AG04450 (cell line): ENCODE measurements at regions of chr12 and their contacts with region 1.

Region 1: GRCh38 chr12:32455607-32456071 is 56.3 kb downstream of the FGD4 start:
- DNase-seq: peak; percentile 33
- H3K4me3 ChIP-seq: peak overlapping the region; percentile 46
- H3K27ac ChIP-seq: no peak overlapping the region
- H3K27me3 ChIP-seq: no peaks in the 10 kb centered on the region
- CTCF ChIP-seq: peak; percentile 66

Region 2: DNA sequence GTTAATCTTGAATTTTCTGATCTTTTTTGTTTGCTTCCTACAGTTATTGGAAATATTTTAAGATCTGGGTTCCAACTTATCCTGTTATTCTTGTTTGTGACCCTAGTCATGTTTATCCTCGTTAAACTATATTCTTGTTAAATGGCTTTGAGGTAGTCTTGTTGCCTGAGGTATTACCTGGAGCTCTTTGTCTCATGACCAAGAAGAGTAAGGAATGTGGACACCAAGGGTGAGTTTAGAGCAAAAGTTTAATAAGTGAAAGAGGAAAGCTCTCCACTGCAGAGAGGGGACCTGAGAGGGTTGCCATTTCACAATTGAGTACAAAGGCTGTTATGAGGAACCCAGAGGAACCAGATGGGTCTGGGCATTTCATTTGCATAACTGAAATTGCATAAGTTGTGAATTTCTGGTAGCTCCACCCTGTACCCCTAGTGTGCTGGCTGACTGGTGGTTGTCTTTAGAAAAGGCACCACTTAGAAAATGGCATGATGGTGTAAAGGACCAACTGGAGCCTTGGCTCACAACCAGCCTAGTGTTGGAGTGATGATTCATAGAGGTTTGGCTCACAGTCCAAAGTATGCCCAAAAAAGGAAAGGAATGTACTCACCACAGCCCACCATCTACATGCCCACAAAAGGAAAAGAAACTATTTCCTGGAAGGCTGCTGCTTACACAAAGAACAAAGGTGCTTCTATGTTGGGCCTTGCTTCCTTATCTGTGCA is 533.1 kb before region 1 on chr12:
- CTCF ChIA-PET with region 1: interaction called, 11 read pairs
- POLR2A ChIA-PET with region 1: no interaction called
- DNase-seq: no peak
- H3K4me3 ChIP-seq: no peak overlapping the region
- H3K27ac ChIP-seq: no peak overlapping the region
- H3K27me3 ChIP-seq: no peaks in the 10 kb centered on the region
- CTCF ChIP-seq: no peak

Region 3: GRCh38 chr12:32482226-32482625 is 26.6 kb after region 1 on chr12:
- CTCF ChIA-PET with region 1: no interaction called
- POLR2A ChIA-PET with region 1: no interaction called
- DNase-seq: no peak
- H3K4me3 ChIP-seq: no peak overlapping the region
- H3K27ac ChIP-seq: no peak overlapping the region
- H3K27me3 ChIP-seq: peaks cover 3% of the 10 kb centered on the region
- CTCF ChIP-seq: no peak

Region 4: DNA sequence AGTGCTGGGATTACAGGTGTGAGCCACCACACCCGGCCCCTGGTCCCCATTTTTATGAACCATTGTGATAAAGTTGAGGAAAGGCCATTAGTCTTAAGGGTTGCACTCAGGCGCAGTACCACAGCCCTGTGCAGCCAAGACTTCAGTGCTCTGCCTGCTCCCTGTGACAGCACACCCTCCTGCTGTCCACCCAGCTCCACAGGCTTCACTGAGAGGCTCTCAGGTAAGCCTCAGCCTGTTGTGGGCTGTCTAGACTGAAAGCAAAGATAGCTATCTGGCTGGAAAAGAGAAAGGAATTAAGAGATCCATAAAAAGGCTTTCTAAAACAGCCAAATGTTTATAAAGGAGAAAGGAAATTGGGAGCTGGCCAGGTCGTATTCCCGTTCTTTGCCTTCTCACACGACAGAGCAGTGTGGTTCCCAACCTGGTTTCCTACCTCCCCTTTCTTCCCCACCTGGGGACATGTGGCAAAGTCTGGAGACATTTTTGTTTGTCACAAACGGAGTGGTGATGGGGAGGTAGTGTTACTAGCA is 204.3 kb after region 1 on chr12:
- CTCF ChIA-PET with region 1: interaction called, 56 read pairs
- POLR2A ChIA-PET with region 1: no interaction called
- DNase-seq: no peak
- H3K4me3 ChIP-seq: no peak overlapping the region
- H3K27ac ChIP-seq: no peak overlapping the region
- H3K27me3 ChIP-seq: no peaks in the 10 kb centered on the region
- CTCF ChIP-seq: no peak

Region 5: GRCh38 chr12:32671930-32672780 is 216.5 kb after region 1 on chr12:
- CTCF ChIA-PET with region 1: interaction called, 65 read pairs
- POLR2A ChIA-PET with region 1: no interaction called
- DNase-seq: peak; percentile 67
- H3K4me3 ChIP-seq: no peak overlapping the region
- H3K27ac ChIP-seq: no peak overlapping the region
- H3K27me3 ChIP-seq: peaks cover 2% of the 10 kb centered on the region
- CTCF ChIP-seq: peak; percentile 63